AG04450 (cell line): ENCODE measurements at regions of chr16 and their contacts with region 1.

Region 1: GRCh38 chr16:69286941-69287713 is 24.0 kb upstream of the VPS4A start:
- DNase-seq: peak; percentile 34
- H3K4me3 ChIP-seq: no peak overlapping the region
- H3K27ac ChIP-seq: no peak overlapping the region
- H3K27me3 ChIP-seq: no peaks in the 10 kb centered on the region
- CTCF ChIP-seq: peak; percentile 59

Region 2: GRCh38 chr16:69150146-69150865 is 136.8 kb before region 1 on chr16:
- CTCF ChIA-PET with region 1: interaction called, 35 read pairs
- POLR2A ChIA-PET with region 1: no interaction called
- DNase-seq: peak; percentile 65
- H3K4me3 ChIP-seq: no peak overlapping the region
- H3K27ac ChIP-seq: no peak overlapping the region
- H3K27me3 ChIP-seq: no peaks in the 10 kb centered on the region
- CTCF ChIP-seq: peak; percentile 82

Region 3: DNA sequence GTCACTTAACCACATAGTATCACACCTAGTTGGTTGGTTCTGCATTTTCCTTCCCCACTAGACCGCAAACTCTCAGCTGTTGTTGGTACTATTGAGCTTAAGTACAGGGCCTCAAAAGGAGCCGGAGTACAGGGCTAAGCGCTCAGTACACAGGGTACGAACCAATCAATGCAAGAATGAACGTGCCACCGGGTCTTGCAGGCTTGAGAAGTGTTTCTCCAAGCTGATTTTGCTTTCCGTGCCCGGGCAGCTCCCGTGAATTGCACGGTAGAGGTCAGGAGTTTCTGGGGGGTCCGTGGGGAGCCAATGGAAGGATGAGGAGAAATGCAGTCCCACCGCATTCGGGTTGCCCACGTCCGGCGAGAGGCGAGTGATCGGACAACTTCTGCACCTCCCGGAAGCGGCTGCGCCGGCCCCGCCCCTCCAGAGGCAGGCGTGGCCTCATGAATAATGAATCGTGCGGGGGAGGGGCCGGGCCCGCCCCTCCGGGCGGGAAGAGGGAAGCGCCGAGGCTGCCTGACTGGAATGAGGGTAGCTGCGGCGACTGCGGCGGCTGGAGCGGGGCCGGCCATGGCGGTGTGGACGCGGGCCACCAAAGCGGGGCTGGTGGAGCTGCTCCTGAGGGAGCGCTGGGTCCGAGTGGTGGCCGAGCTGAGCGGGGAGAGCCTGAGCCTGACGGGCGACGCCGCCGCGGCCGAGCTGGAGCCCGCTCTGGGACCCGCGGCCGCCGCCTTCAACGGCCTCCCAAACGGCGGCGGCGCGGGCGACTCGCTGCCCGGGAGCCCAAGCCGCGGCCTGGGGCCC is 100.3 kb before region 1 on chr16 and contains the start of gene SNTB2:
- CTCF ChIA-PET with region 1: interaction called, 26 read pairs
- POLR2A ChIA-PET with region 1: interaction called, 12 read pairs
- DNase-seq: peak; percentile 55
- H3K4me3 ChIP-seq: peak within 1 kb of the TSS; percentile 77
- H3K27ac ChIP-seq: peak within 1 kb of the TSS; percentile 49
- H3K27me3 ChIP-seq: no peaks in the 10 kb centered on the region
- CTCF ChIP-seq: no peak
- polyA plus RNA-seq, gene SNTB2: 62.6 and 72.0 TPM in 2 replicates

Region 4: DNA sequence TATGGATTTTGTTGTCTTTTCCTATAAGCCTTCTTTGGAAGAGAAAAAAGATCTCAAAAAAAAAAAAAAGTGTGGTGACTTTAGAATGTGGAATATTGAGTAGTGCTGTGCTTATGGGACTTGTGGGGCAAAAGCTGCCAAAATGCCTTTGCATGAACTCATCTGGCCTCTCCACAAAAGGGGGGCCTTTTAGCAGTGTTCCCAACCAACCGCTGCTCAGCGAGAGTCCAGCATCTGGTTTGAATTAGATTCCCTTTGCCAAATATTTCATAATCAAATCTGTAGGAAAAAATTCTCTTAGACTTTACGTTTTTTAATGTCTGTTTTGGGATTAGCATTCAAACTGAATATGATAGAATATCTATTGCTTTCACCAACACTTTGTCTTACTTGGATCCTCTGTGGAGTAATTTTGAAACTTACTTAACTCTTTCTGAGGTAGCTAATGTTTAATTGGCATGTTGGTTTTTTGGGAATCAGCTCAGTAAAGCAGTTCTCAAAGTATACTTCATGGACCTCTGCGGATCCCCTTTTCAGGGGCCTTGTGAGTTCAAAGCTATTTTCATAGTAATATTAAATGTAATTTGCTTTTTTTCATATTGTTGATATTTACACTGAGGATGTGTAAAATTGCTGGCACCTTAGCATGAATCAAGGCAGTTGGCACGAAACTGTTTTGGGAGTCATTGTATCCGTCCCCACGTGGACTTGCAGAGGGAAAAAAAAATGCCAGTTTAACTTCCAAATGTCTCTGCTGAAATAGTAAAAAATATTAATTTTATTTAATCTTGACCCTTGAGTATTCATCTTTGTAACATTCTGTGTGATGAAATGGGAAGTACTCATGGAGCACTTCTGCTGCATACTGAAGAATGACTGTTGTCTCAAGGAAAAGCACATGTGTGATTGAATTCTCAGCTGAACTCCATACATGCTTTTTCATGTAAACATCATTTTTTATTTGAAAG is 10.7 kb before region 1 on chr16:
- CTCF ChIA-PET with region 1: interaction called, 12 read pairs
- POLR2A ChIA-PET with region 1: interaction called, 4 read pairs
- DNase-seq: peak; percentile 95
- H3K4me3 ChIP-seq: peak overlapping the region; percentile 17; the same call in 1 of the 2 replicates
- H3K27ac ChIP-seq: peak overlapping the region; percentile 72
- H3K27me3 ChIP-seq: no peaks in the 10 kb centered on the region
- CTCF ChIP-seq: no peak